Heart left ventricle (tissue), 16 donors: ENCODE measurements at regions of chr7 and their contacts with region 1.

Region 1: DNA sequence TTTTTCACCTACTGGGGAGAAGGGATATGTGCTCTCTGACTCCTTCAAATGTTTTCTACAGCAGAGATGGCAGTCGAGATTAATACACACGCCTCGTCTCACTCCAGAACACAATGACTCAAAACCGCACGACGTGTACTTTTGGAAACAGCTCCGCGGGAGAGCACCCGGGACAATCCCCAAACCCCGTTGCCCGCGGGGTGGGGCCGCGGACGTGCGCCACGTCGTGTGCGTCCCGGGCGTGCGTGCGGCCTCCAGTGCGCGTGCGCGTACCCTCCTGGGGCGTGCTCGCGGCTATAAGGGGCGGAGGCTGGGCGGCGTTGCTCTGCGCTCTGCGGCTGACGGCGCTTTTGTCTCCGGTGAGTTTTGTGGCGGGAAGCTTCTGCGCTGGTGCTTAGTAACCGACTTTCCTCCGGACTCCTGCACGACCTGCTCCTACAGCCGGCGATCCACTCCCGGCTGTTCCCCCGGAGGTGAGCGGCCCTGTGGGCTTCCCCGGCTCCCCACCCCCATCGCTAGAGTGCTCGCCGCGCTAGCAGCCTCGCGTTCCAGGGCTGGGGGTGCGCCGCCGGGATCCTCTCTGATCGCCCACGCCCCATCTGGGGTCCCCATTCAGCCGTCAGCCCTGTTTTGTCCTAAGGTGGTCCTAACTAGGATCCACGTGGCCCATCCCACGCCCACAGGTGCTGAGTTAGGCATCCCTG is at the start of gene HILPDA:
- DNase-seq: peak; percentile 93 to 98 (median 96)
- ATAC-seq: peak; percentile 83 to 95 (median 94)
- H3K4me3 ChIP-seq: peak within 1 kb of the TSS; percentile 54 to 93 (median 78)
- H3K27ac ChIP-seq: peak within 1 kb of the TSS; percentile 86 to 99 (median 92)
- H3K4me1 ChIP-seq: peaks cover 7 to 49% (median 38%) of the 10 kb centered on the region in 12 donors
- H3K27me3 ChIP-seq: no peaks in the 10 kb centered on the region
- CTCF ChIP-seq: peak in 1 of 12 donors; percentile 15
- POLR2A ChIP-seq: peak in 1 of 2 donors; percentile 85
- total RNA-seq, gene HILPDA: 6.1 to 17.7 (median 7.7) TPM

Region 2: GRCh38 chr7:128347647-128348097 is 108.0 kb before region 1 on chr7:
- intact Hi-C with region 1: loop called in 1 of 10 experiments (anchors 5 kb)
- DNase-seq: peak in 3 of 5 donors; percentile 49 to 67 (median 53)
- ATAC-seq: peak in 2 of 4 donors; percentile 25 to 42
- H3K4me3 ChIP-seq: no peak overlapping the region
- H3K27ac ChIP-seq: no peak overlapping the region
- H3K4me1 ChIP-seq: peaks cover 0 to 22% (median 9%) of the 10 kb centered on the region in 12 donors
- H3K27me3 ChIP-seq: peaks cover 0 to 21% (median 6%) of the 10 kb centered on the region in 9 donors
- CTCF ChIP-seq: peak; percentile 51 to 74 (median 67)
- POLR2A ChIP-seq: no peak

Region 3: DNA sequence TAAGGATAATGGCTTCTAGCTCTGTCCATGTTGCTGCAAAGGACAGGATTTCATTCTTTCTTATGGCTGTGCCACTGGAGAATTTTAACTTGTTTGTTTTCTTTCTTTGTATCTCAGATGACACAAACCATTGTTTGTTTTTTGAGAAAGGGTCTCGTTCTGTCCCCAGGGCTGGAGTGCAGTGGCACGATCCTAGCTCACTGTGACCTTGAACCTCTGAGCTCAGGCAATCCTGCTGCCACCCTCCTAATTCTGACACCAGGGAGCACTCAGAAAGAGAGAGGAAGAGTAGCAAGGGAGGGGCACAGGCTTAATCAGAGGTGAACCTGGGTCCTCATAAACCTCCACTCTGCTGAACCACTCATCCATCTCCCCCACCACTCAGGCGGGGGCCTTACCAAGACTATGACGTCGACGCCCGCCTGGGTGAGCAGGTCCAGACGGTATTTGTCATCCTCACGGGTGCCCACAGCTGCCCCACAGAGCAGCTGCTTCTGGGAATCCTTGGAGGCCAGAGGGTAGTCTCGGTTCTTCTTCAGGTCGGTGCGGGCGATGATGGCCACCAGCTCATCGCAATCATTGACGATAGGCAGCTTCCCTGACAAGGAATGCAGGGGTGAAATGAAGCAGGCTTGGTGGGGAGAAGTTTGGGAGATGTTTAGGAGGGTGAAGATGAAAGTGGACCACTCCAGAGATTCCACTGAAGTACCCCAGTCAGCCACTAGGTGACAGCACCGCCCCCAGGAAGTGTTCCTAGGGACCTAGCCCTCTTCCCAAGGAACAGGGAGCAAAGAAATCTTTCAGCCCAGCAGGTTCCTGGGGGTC is 57.5 kb before region 1 on chr7:
- intact Hi-C with region 1: loop called in 4 of 10 experiments (anchors 2 to 10 kb)
- DNase-seq: peak in 2 of 5 donors; percentile 53 to 57
- ATAC-seq: peak in 3 of 4 donors; percentile 59 to 73 (median 72)
- H3K4me3 ChIP-seq: no peak overlapping the region
- H3K27ac ChIP-seq: no peak overlapping the region
- H3K4me1 ChIP-seq: no peaks in the 10 kb centered on the region
- H3K27me3 ChIP-seq: no peaks in the 10 kb centered on the region
- CTCF ChIP-seq: peak; percentile 88 to 98 (median 93)
- POLR2A ChIP-seq: no peak

Region 4: GRCh38 chr7:128409596-128410160 is 46.0 kb before region 1 on chr7 and contains the start of gene IMPDH1:
- intact Hi-C with region 1: loop called in 2 of 10 experiments (anchors 10 kb)
- DNase-seq: peak; percentile 89 to 96 (median 91)
- ATAC-seq: peak; percentile 71 to 94 (median 92)
- H3K4me3 ChIP-seq: peak within 1 kb of the TSS; percentile 48 to 87 (median 71)
- H3K27ac ChIP-seq: peak within 1 kb of the TSS; percentile 21 to 94 (median 82)
- H3K4me1 ChIP-seq: peaks cover 0 to 53% (median 38%) of the 10 kb centered on the region in 12 donors
- H3K27me3 ChIP-seq: no peaks in the 10 kb centered on the region
- CTCF ChIP-seq: peak in 1 of 12 donors; percentile 5
- POLR2A ChIP-seq: peak in 1 of 2 donors; percentile 78
- total RNA-seq, gene IMPDH1: 12.3 to 65.3 (median 25.7) TPM

Region 5: GRCh38 chr7:128425850-128426249 is 29.9 kb before region 1 on chr7:
- intact Hi-C with region 1: loop called in 9 of 10 experiments (anchors 1 to 2 kb)
- DNase-seq: peak; percentile 55 to 76 (median 66)
- ATAC-seq: peak; percentile 45 to 60 (median 56)
- H3K4me3 ChIP-seq: no peak overlapping the region
- H3K27ac ChIP-seq: no peak overlapping the region
- H3K4me1 ChIP-seq: peaks cover 0 to 14% (median 0%) of the 10 kb centered on the region in 12 donors
- H3K27me3 ChIP-seq: no peaks in the 10 kb centered on the region
- CTCF ChIP-seq: peak; percentile 79 to 98 (median 86)
- POLR2A ChIP-seq: no peak

Region 6: GRCh38 chr7:128437426-128438332 is 18.0 kb before region 1 on chr7:
- intact Hi-C with region 1: no loop called
- DNase-seq: no peak
- ATAC-seq: no peak
- H3K4me3 ChIP-seq: no peak overlapping the region
- H3K27ac ChIP-seq: peak overlapping the region in 1 of 12 donors; percentile 84
- H3K4me1 ChIP-seq: peaks cover 0 to 10% (median 0%) of the 10 kb centered on the region in 12 donors
- H3K27me3 ChIP-seq: no peaks in the 10 kb centered on the region
- CTCF ChIP-seq: no peak
- POLR2A ChIP-seq: no peak